CD4-positive, alpha-beta T cell (primary cell): ENCODE measurements at regions of chr18 and their contacts with region 1.

Region 1: DNA sequence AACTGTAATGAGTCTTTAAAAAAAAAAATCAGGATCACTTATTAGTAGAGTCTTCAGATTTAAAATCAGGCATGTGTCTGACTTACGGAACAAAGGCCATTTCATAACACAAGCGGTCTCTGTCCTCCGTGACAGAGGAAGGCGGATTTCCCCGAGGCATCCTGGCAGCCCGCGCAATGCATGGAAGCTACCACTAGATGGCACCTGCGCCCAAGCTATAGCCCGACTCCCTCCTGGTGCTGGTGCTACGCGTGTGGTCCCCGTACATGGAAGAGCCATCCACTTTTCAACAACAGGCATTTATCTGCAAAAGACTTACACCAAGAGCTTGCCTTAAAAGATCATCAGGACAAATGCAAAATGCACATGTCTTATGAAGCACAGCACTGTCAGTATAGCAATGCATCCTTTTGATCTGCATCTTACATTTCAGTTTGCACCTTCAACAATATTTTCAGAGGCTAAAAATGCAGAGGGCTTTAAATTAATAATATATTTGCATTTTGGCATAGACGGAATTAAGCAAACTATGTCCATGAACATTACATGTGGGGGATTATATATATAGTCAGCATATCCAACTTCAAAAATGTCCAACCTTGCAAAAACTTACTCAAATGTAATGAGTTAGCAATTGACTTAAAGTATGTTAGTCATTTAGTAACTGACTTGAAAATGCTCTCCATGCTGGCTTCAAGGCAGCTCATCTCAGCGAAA is 96.0 kb downstream of the ZNF516 start:
- DNase-seq: peak; percentile 57 to 87 (median 72)
- ATAC-seq: peak; percentile 94
- H3K4me3 ChIP-seq: no peak overlapping the region
- H3K4me3 Mint-ChIP-seq: no peak overlapping the region
- H3K27ac ChIP-seq: no peak overlapping the region
- H3K27ac Mint-ChIP-seq: no peak overlapping the region
- H3K4me1 ChIP-seq: peaks cover 6% of the 10 kb centered on the region
- H3K4me1 Mint-ChIP-seq: peaks cover 26% of the 10 kb centered on the region
- H3K27me3 ChIP-seq: no peaks in the 10 kb centered on the region
- H3K27me3 Mint-ChIP-seq: no peaks in the 10 kb centered on the region
- CTCF ChIP-seq: peak; percentile 97

Region 2: DNA sequence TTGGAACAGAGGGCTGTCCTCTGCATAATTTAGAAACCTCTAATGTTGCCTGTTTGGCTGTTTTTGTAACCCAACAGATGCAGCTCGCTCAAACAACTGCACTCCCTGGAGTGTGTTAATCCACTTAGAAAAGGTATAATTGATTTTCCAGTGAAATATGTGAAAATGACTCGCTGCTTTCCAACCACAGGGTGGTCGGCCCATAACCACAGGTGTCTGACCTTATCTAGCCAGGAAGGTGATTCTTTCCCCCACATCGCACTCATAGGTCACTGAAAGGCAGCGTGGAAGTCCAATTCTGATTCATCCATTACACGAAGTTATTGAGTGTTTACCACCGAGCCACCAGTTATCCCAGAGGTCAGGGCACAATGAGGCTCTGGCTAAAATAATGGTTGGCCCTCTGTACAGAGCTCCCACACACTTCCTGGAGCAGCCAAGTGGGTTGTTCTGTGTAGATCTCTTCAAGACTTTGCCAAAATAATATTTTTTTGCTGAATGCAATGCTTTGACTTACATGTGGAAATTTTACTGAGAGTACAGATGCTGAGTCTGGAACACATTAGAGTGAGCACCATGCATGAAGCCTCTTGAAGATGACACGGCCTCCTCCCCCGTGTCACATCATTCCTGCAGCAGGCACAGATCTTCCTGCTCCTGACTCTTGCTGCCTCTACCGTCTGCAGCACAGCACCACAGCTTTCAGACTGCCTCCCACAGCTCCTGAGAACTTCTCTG is 300.2 kb before region 1 on chr18:
- CTCF ChIA-PET with region 1: no interaction called
- POLR2A ChIA-PET with region 1: no interaction called
- intact Hi-C with region 1: no loop called
- DNase-seq: no peak
- ATAC-seq: no peak
- H3K4me3 ChIP-seq: no peak overlapping the region
- H3K4me3 Mint-ChIP-seq: no peak overlapping the region
- H3K27ac ChIP-seq: no peak overlapping the region
- H3K27ac Mint-ChIP-seq: no peak overlapping the region
- H3K4me1 ChIP-seq: no peaks in the 10 kb centered on the region
- H3K4me1 Mint-ChIP-seq: no peaks in the 10 kb centered on the region
- H3K27me3 ChIP-seq: no peaks in the 10 kb centered on the region
- H3K27me3 Mint-ChIP-seq: peaks cover 5% of the 10 kb centered on the region
- CTCF ChIP-seq: no peak

Region 3: DNA sequence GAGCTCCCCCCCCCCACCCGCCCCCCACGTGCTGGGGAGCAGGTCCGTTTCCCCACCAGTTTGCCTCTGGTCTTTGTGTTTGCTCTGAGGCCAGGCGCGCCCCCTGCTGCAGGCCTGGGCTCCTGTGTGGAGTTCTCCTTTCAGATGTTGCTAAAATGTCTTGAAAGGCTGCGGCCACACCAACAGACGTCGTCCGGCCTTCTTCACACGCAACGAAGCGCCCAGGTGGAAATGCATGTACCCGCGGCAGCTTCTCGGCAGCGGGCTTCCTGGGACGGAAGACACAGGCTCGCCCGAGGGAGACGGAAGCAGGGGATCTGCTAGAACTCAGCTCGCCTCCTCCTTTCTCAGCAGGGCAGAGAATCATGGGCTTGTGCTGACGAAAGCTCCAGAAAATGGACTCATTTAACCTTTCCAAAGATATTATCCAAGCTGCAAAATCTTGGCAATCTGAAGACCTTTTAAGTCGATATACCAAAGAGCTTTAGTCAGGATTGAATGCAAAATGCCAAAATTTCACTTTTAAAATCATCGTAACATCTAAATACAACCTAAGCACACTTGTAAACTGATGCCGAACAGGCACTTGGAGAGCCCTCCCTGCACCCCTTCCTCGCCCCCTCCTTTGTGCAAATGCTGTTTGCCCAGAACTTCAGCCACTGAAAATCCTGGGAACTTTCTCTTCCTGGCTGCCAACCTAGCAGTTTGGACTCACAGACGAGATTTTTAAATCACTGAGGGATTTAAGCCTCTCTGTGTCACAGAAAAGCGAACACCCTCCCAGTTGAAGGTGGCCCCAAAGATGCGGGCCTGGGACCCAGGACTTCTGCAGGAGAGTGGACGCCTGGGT is 221.5 kb after region 1 on chr18:
- CTCF ChIA-PET with region 1: no interaction called
- POLR2A ChIA-PET with region 1: no interaction called
- intact Hi-C with region 1: loop called (anchors 1 to 2 kb)
- DNase-seq: peak in 9 of 14 experiments; percentile 4 to 54 (median 16)
- ATAC-seq: peak; percentile 29
- H3K4me3 ChIP-seq: no peak overlapping the region
- H3K4me3 Mint-ChIP-seq: peak overlapping the region; percentile 74
- H3K27ac ChIP-seq: no peak overlapping the region
- H3K27ac Mint-ChIP-seq: no peak overlapping the region
- H3K4me1 ChIP-seq: peaks cover 5% of the 10 kb centered on the region
- H3K4me1 Mint-ChIP-seq: peaks cover 19% of the 10 kb centered on the region
- H3K27me3 ChIP-seq: peaks cover 4 to 10% of the 10 kb centered on the region in 2 experiments
- H3K27me3 Mint-ChIP-seq: peaks cover 53% of the 10 kb centered on the region
- CTCF ChIP-seq: peak; percentile 19

Region 4: GRCh38 chr18:76686737-76687262 is 287.7 kb after region 1 on chr18:
- CTCF ChIA-PET with region 1: no interaction called
- POLR2A ChIA-PET with region 1: no interaction called
- intact Hi-C with region 1: loop called (anchors 2 kb)
- DNase-seq: peak in 7 of 14 experiments; percentile 5 to 38 (median 16)
- ATAC-seq: peak; percentile 64
- H3K4me3 ChIP-seq: no peak overlapping the region
- H3K4me3 Mint-ChIP-seq: no peak overlapping the region
- H3K27ac ChIP-seq: no peak overlapping the region
- H3K27ac Mint-ChIP-seq: no peak overlapping the region
- H3K4me1 ChIP-seq: peaks cover 3% of the 10 kb centered on the region
- H3K4me1 Mint-ChIP-seq: peaks cover 4% of the 10 kb centered on the region
- H3K27me3 ChIP-seq: peaks cover 0 to 6% of the 10 kb centered on the region in 2 experiments
- H3K27me3 Mint-ChIP-seq: peaks cover 44% of the 10 kb centered on the region
- CTCF ChIP-seq: peak; percentile 32

Region 5: DNA sequence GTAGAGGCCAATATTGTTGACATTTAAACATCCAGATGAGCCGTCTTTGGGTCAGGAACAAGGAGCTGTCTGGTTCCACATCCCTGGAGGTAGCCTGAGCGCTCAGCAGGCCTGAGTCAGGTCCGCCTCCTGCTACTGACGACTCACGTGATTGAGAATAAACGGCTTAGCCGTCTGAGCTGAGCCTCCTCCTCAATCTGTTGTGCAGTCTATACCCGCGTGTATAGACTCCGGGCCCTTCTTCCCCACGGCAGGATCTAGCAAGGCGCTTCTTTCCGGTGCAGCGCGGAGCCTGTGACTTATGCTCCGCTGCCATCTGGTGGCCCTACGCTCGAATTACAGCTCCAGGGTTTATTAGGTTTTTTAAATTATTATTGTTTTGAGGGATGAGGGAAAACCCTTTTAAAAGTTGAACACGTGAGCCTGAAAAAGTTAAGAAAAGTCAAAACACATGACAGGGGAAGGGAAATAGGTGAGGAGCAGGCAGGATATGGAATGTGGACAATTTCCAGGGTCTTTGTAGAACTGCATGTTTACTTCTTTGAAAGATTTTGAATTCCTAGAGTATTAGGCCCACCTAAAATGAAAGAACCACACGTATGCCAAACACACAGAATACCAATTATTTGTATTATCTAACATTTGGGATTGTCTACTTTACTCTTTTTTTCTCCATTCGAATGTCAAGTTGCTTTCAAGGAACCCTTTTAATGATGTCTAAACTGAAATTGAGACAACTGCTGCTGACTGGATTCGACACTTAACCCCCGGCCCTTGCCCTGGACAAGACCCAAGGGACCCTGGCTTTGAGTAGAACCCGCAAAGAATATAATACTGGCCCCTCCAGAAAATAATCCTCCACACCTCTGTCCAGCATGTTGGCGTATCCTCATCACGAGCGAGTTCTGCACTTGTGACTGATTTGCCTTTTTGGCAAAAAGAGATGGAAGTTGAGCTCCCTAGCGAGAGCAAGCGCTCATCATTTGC is 310.9 kb after region 1 on chr18:
- CTCF ChIA-PET with region 1: interaction called, 26 read pairs
- POLR2A ChIA-PET with region 1: interaction called, 4 read pairs
- intact Hi-C with region 1: loop called (anchors 1 kb)
- DNase-seq: peak; percentile 41 to 80 (median 52)
- ATAC-seq: peak; percentile 97
- H3K4me3 ChIP-seq: no peak overlapping the region
- H3K4me3 Mint-ChIP-seq: no peak overlapping the region
- H3K27ac ChIP-seq: no peak overlapping the region
- H3K27ac Mint-ChIP-seq: no peak overlapping the region
- H3K4me1 ChIP-seq: peaks cover 5% of the 10 kb centered on the region
- H3K4me1 Mint-ChIP-seq: peaks cover 11% of the 10 kb centered on the region
- H3K27me3 ChIP-seq: no peaks in the 10 kb centered on the region
- H3K27me3 Mint-ChIP-seq: peaks cover 5% of the 10 kb centered on the region
- CTCF ChIP-seq: peak; percentile 90